Activated naive CD4-positive, alpha-beta T cell treated with anti-CD3 and anti-CD28 coated beads for 36 hours (primary cell): ENCODE measurements at regions of chr5 and their contacts with region 1.

Region 1: DNA sequence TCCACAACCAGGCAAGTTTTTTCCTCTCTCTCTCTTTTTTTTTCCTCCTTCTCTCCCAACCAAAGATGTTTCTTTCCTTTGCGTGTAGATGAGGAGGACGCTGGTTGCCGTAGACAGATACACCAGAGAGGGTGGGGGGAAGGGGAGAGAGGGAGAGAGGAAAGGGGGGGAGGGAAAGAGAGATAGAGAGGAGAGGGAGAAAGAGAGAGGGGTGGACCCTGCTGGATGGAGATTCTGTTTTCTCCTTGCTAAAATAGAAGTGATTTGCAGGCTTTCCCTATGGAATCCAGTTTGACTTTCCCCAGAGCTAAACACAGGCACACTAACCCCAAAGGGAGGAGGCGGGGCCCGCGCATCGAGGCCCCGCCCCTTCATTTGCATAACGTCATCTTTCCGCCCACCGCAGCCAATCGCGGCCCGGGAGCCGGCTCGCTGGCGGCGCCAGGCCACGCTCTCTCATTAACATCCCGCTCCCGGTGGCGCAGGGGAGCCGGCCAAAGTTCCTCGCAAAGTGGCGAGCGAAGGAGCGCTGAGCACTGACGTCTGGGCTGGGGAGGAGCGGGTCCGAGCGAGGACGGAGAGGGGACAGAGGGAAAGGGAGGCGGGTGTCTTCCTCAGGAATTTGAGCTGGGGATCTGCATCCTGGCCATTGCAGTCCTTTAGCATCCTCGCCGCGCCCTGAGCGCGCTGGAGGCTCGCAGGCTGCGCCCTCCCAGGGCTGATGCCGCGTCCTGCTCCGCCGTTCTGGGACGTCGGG is 487 bp upstream of the EBF1 start:
- DNase-seq: peak; percentile 85
- H3K4me3 Mint-ChIP-seq: peak overlapping the region; percentile 85
- H3K27ac Mint-ChIP-seq: peak overlapping the region; percentile 55
- H3K4me1 Mint-ChIP-seq: peaks cover 34% of the 10 kb centered on the region
- H3K27me3 Mint-ChIP-seq: peaks cover 58% of the 10 kb centered on the region

Region 2: GRCh38 chr5:158746979-158747378 is 353.2 kb before region 1 on chr5:
- CTCF ChIA-PET with region 1: no interaction called
- intact Hi-C with region 1: no loop called
- DNase-seq: no peak
- H3K4me3 Mint-ChIP-seq: no peak overlapping the region
- H3K27ac Mint-ChIP-seq: no peak overlapping the region
- H3K4me1 Mint-ChIP-seq: peaks cover 4% of the 10 kb centered on the region
- H3K27me3 Mint-ChIP-seq: peaks cover 3% of the 10 kb centered on the region

Region 3: DNA sequence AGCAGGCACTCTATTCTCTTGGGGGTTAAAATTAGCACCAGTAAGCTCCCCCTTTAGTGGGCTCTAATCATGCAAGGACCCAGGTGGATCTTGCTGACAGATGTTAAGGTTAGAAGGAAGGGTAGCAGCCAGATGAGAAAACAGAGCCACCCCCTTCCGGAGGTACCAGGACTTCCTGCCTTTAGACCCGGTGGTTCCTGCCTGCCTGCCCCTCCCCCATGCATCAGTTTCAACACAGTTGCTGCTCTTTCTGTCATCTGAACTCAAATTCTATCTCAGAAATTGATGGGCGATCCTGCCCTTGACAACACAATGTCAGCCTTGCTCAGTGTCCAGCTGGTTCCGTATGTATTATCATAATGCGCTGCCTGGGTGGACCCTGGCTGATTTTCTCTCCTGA is 287.8 kb before region 1 on chr5:
- CTCF ChIA-PET with region 1: no interaction called
- intact Hi-C with region 1: loop called (anchors 2 kb)
- DNase-seq: peak; percentile 84
- H3K4me3 Mint-ChIP-seq: peak overlapping the region; percentile 36
- H3K27ac Mint-ChIP-seq: peak overlapping the region; percentile 77
- H3K4me1 Mint-ChIP-seq: peaks cover 36% of the 10 kb centered on the region
- H3K27me3 Mint-ChIP-seq: no peaks in the 10 kb centered on the region

Region 4: GRCh38 chr5:158875272-158875679 is 224.9 kb before region 1 on chr5:
- CTCF ChIA-PET with region 1: no interaction called
- intact Hi-C with region 1: loop called (anchors 1 kb)
- DNase-seq: no peak
- H3K4me3 Mint-ChIP-seq: no peak overlapping the region
- H3K27ac Mint-ChIP-seq: no peak overlapping the region
- H3K4me1 Mint-ChIP-seq: peaks cover 29% of the 10 kb centered on the region
- H3K27me3 Mint-ChIP-seq: no peaks in the 10 kb centered on the region

Region 5: GRCh38 chr5:158958021-158958994 is 141.9 kb before region 1 on chr5:
- CTCF ChIA-PET with region 1: no interaction called
- intact Hi-C with region 1: loop called (anchors 1 kb)
- DNase-seq: peak; percentile 56
- H3K4me3 Mint-ChIP-seq: no peak overlapping the region
- H3K27ac Mint-ChIP-seq: peak overlapping the region; percentile 19
- H3K4me1 Mint-ChIP-seq: peaks cover 18% of the 10 kb centered on the region
- H3K27me3 Mint-ChIP-seq: no peaks in the 10 kb centered on the region